ENCODE measurements at regions of chr9 and their contacts with region 1.

Region 1: DNA sequence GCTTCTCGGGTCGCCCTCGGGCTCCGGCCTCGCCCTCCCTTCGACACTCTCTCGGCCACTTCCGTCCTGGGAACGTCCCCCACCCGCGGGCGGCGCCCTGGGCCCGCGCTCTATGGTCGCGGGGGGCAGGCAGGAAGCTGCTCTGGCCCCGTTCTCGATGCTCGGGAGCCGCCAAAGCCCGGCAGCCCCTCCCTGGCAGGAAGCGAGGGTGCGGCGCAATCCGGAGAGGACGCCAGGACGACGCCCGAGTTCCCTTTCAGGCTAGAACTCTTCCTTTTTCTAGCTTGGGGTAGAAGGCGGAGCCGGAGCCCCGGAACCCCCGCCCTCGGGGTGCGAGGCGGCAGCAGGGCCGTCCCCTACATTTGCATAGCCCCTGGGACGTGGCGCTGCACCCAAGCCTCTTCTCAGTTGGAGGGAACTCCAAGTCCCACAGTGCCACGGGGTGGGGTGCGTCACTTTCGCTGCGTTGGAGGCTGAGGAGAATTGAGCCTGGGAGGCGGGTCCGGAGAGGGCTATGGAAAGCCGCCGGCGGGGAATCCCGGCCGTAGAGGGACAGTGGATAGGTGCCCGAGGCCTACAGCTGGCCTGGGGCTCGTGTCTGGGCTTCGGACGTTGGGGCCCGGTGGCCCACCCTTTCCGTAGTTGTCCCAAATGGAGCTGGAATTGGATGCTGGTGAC is at the starts of genes CREB3 and TLN1:
- DNase-seq: peak; percentile 100
- H3K4me3 ChIP-seq: peak within 1 kb of the TSS; percentile 66 to 90 (median 76)
- H3K27ac ChIP-seq: peak within 1 kb of the TSS; percentile 94 to 100 (median 98)
- H3K4me1 ChIP-seq: peaks cover 48 to 90% (median 72%) of the 10 kb centered on the region in 6 donors
- H3K27me3 ChIP-seq: no peaks in the 10 kb centered on the region
- CTCF ChIP-seq: peak in 4 of 11 experiments; percentile 26 to 50 (median 34)
- POLR2A ChIP-seq: peak in 1 of 3 donors; percentile 79
- total RNA-seq, gene CREB3: 21.8 to 35.9 (median 26.0) TPM
- total RNA-seq, gene TLN1: 356 to 881 (median 592) TPM

Region 2: GRCh38 chr9:35603987-35604577 is 128.2 kb before region 1 on chr9:
- intact Hi-C with region 1: loop called (anchors 10 kb)
- DNase-seq: peak; percentile 100
- H3K4me3 ChIP-seq: peak overlapping the region; percentile 40 to 93 (median 76)
- H3K27ac ChIP-seq: peak overlapping the region; percentile 67 to 96 (median 90)
- H3K4me1 ChIP-seq: peaks cover 12 to 54% (median 42%) of the 10 kb centered on the region in 6 donors
- H3K27me3 ChIP-seq: no peaks in the 10 kb centered on the region
- CTCF ChIP-seq: peak; percentile 96 to 99 (median 98)
- POLR2A ChIP-seq: peak in 1 of 3 donors; percentile 34

Region 3: DNA sequence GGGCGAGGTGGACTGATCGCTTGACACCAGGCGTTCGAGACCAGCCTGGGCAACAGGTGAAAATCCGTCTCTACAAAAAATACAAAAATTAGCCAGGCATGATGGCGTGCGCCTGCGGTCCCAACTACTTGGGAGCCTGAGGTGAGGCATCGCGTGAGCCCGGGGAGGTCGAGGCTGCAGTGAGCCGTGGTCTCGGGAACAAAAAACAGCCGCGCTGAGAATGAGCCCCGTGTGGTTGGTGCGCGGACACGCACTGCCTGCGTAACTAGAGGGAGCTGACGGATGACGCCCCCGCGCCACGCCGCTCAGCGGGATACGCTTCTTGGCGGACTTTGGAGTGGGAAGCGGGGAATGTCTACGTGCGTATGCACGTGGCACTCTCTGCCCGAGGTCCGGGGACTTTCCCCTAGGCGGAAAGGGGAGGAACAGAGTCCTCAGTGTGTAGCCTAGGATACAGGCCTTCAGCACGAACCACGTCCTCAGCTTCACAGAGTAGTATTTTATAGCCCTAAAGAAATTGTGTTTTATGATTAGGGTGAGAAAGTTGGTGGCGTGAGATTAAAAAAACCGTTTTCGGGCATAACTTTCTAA is 74.6 kb before region 1 on chr9 and contains the start of gene RMRP:
- intact Hi-C with region 1: loop called (anchors 5 kb)
- DNase-seq: peak; percentile 96
- H3K4me3 ChIP-seq: peak within 1 kb of the TSS; percentile 78 to 93 (median 87)
- H3K27ac ChIP-seq: peak within 1 kb of the TSS; percentile 91 to 98 (median 97)
- H3K4me1 ChIP-seq: peaks cover 37 to 83% (median 56%) of the 10 kb centered on the region in 6 donors
- H3K27me3 ChIP-seq: no peaks in the 10 kb centered on the region
- CTCF ChIP-seq: peak in 6 of 11 experiments; percentile 30 to 52 (median 36)
- POLR2A ChIP-seq: peak in 1 of 3 donors; percentile 71
- total RNA-seq, gene RMRP: 5,541 to 28,996 (median 23,209) TPM